CD4-positive, alpha-beta T cell (primary cell): ENCODE measurements at regions of chr16 and their contacts with region 1.

Region 1: GRCh38 chr16:29926005-29926710 is at the start of gene KCTD13:
- DNase-seq: peak; percentile 75 to 94 (median 86)
- ATAC-seq: peak; percentile 89
- H3K4me3 ChIP-seq: peak within 1 kb of the TSS; percentile 74
- H3K4me3 Mint-ChIP-seq: peak within 1 kb of the TSS; percentile 95
- H3K27ac ChIP-seq: peak within 1 kb of the TSS; percentile 42 to 72
- H3K27ac Mint-ChIP-seq: peak within 1 kb of the TSS; percentile 93
- H3K4me1 ChIP-seq: peaks cover 30% of the 10 kb centered on the region
- H3K4me1 Mint-ChIP-seq: peaks cover 38% of the 10 kb centered on the region
- H3K27me3 ChIP-seq: no peaks in the 10 kb centered on the region
- H3K27me3 Mint-ChIP-seq: no peaks in the 10 kb centered on the region
- CTCF ChIP-seq: no peak
- total RNA-seq, gene KCTD13: 40.0 to 43.8 TPM

Region 2: DNA sequence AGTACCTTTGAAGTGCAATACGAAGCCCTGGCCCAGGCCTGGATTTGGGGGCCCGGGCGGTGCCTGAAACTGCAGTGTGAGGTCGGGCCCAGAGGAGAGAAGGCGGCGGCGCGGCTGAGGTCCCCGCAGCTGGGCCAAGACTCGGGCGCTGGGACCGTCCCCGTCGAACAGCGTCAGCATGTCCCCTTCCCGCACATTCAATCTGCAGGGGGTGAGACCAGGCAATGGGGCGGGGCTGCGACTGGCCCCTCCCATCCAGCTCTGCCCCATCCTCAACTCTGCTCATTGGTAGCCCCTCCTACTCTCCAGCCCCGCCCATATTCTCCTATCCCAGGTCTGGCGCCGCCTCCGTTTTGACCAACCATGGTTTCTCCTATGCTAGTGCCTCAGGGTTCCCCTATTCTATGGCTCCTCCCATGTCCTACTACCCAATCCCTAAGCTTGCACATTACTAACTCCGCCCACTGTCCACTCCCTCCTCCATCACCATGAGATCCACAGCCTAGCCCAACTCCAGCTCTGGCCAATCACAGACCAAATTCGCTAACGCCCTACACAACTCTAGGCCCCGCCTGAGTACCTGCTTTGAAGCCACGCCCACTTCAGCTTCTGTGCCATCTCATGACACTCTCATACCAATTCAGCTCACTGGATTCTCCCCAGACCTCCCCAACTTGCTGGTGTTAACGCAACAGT is 48.7 kb before region 1 on chr16:
- CTCF ChIA-PET with region 1: no interaction called
- POLR2A ChIA-PET with region 1: no interaction called
- intact Hi-C with region 1: no loop called
- DNase-seq: peak in 11 of 14 experiments; percentile 18 to 77 (median 38)
- ATAC-seq: peak; percentile 66
- H3K4me3 ChIP-seq: peak overlapping the region; percentile 45
- H3K4me3 Mint-ChIP-seq: peak overlapping the region; percentile 89
- H3K27ac ChIP-seq: no peak overlapping the region
- H3K27ac Mint-ChIP-seq: no peak overlapping the region
- H3K4me1 ChIP-seq: peaks cover 20% of the 10 kb centered on the region
- H3K4me1 Mint-ChIP-seq: peaks cover 18% of the 10 kb centered on the region
- H3K27me3 ChIP-seq: peaks cover 23 to 29% of the 10 kb centered on the region in 2 experiments
- H3K27me3 Mint-ChIP-seq: peaks cover 29% of the 10 kb centered on the region
- CTCF ChIP-seq: no peak

Region 3: GRCh38 chr16:29900102-29900887 is 25.9 kb before region 1 on chr16 and contains the start of gene ASPHD1:
- CTCF ChIA-PET with region 1: no interaction called
- POLR2A ChIA-PET with region 1: interaction called, 18 read pairs
- intact Hi-C with region 1: no loop called
- DNase-seq: peak in 11 of 14 experiments; percentile 47 to 88 (median 70)
- ATAC-seq: peak; percentile 89
- H3K4me3 ChIP-seq: peak within 1 kb of the TSS; percentile 55
- H3K4me3 Mint-ChIP-seq: peak within 1 kb of the TSS; percentile 74
- H3K27ac ChIP-seq: no peak within 1 kb of the TSS
- H3K27ac Mint-ChIP-seq: no peak within 1 kb of the TSS
- H3K4me1 ChIP-seq: peaks cover 22% of the 10 kb centered on the region
- H3K4me1 Mint-ChIP-seq: peaks cover 4% of the 10 kb centered on the region
- H3K27me3 ChIP-seq: peaks cover 28 to 29% of the 10 kb centered on the region in 2 experiments
- H3K27me3 Mint-ChIP-seq: peaks cover 31% of the 10 kb centered on the region
- CTCF ChIP-seq: no peak
- total RNA-seq, gene ASPHD1: not detected

Region 4: DNA sequence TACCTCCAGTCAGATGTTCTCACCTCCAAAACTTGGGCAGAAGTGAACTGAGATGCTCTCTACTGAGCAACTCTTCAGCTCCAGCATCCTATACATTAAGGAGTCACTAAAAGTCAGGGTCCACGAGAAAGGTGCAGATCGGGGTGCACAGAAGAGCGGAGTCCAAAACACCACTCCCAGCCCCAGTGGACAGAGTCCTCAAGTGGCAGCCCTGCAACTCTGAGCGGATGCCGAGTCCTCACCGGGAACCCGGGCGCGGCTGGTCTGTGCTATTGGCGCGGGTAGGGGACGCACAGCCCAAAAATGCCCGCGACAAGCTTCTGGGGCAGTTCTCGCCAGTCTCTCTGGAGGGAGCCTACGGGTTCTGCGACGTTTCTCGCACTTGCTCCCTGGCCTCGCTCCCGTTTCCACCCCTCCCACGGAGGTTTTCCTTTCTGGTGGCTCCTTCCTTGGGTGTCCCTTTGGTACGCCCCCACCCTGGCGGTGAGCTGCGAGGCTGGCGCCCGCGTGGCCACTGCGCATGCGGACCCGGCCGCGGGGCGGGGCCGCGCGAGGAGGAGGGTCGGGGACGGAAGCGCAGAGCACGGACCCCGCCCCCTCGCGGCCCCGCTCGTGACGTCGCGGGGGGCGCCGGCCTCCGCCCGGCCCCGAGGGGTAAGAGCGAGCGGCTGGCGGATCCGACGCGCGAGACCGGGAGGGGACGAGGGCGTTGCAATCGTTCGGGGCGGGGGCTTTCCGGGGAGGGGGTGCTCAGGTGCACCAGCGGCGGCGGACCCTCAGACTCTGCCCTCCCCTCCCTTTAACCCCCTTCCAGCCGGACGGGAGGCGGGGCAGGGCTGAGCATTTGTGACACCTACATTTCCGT is 35.6 kb after region 1 on chr16 and contains the start of gene TMEM219:
- CTCF ChIA-PET with region 1: interaction called, 7 read pairs
- POLR2A ChIA-PET with region 1: interaction called, 40 read pairs
- intact Hi-C with region 1: loop called (anchors 1 to 2 kb)
- DNase-seq: peak; percentile 87 to 97 (median 94)
- ATAC-seq: peak; percentile 83
- H3K4me3 ChIP-seq: peak within 1 kb of the TSS; percentile 88
- H3K4me3 Mint-ChIP-seq: peak within 1 kb of the TSS; percentile 93
- H3K27ac ChIP-seq: peak within 1 kb of the TSS; percentile 77 to 92
- H3K27ac Mint-ChIP-seq: peak within 1 kb of the TSS; percentile 91
- H3K4me1 ChIP-seq: peaks cover 23% of the 10 kb centered on the region
- H3K4me1 Mint-ChIP-seq: peaks cover 31% of the 10 kb centered on the region
- H3K27me3 ChIP-seq: no peaks in the 10 kb centered on the region
- H3K27me3 Mint-ChIP-seq: no peaks in the 10 kb centered on the region
- CTCF ChIP-seq: peak; percentile 32
- total RNA-seq, gene TMEM219: 56.9 to 63.3 TPM

Region 5: GRCh38 chr16:29973384-29974246 is 47.5 kb after region 1 on chr16 and contains the start of gene TAOK2:
- CTCF ChIA-PET with region 1: interaction called, 3 read pairs
- POLR2A ChIA-PET with region 1: interaction called, 21 read pairs
- intact Hi-C with region 1: loop called in 1 of 2 experiments (anchors 5 kb)
- DNase-seq: peak; percentile 76 to 98 (median 90)
- ATAC-seq: peak; percentile 87
- H3K4me3 ChIP-seq: peak within 1 kb of the TSS; percentile 99
- H3K4me3 Mint-ChIP-seq: peak within 1 kb of the TSS; percentile 98
- H3K27ac ChIP-seq: peak within 1 kb of the TSS; percentile 70 to 83
- H3K27ac Mint-ChIP-seq: peak within 1 kb of the TSS; percentile 84
- H3K4me1 ChIP-seq: peaks cover 39% of the 10 kb centered on the region
- H3K4me1 Mint-ChIP-seq: peaks cover 50% of the 10 kb centered on the region
- H3K27me3 ChIP-seq: no peaks in the 10 kb centered on the region
- H3K27me3 Mint-ChIP-seq: no peaks in the 10 kb centered on the region
- CTCF ChIP-seq: no peak
- total RNA-seq, gene TAOK2: 13.1 to 14.1 TPM

Region 6: GRCh38 chr16:30142672-30143346 is 216.7 kb after region 1 on chr16:
- CTCF ChIA-PET with region 1: no interaction called
- POLR2A ChIA-PET with region 1: no interaction called
- intact Hi-C with region 1: no loop called
- DNase-seq: peak in 6 of 14 experiments; percentile 9 to 66 (median 43)
- ATAC-seq: peak; percentile 56
- H3K4me3 ChIP-seq: no peak overlapping the region
- H3K4me3 Mint-ChIP-seq: no peak overlapping the region
- H3K27ac ChIP-seq: no peak overlapping the region
- H3K27ac Mint-ChIP-seq: peak overlapping the region; percentile 69
- H3K4me1 ChIP-seq: peaks cover 20% of the 10 kb centered on the region
- H3K4me1 Mint-ChIP-seq: peaks cover 15% of the 10 kb centered on the region
- H3K27me3 ChIP-seq: no peaks in the 10 kb centered on the region
- H3K27me3 Mint-ChIP-seq: no peaks in the 10 kb centered on the region
- CTCF ChIP-seq: peak; percentile 28

Region 7: GRCh38 chr16:30187971-30188561 is 261.9 kb after region 1 on chr16:
- CTCF ChIA-PET with region 1: no interaction called
- POLR2A ChIA-PET with region 1: no interaction called
- intact Hi-C with region 1: no loop called
- DNase-seq: peak in 3 of 14 experiments; percentile 1 to 38 (median 35)
- ATAC-seq: no peak
- H3K4me3 ChIP-seq: peak overlapping the region; percentile 100
- H3K4me3 Mint-ChIP-seq: peak overlapping the region; percentile 42
- H3K27ac ChIP-seq: peak overlapping the region; percentile 29 to 96
- H3K27ac Mint-ChIP-seq: peak overlapping the region; percentile 98
- H3K4me1 ChIP-seq: peaks cover 40% of the 10 kb centered on the region
- H3K4me1 Mint-ChIP-seq: peaks cover 22% of the 10 kb centered on the region
- H3K27me3 ChIP-seq: no peaks in the 10 kb centered on the region
- H3K27me3 Mint-ChIP-seq: no peaks in the 10 kb centered on the region
- CTCF ChIP-seq: no peak

Region 8: GRCh38 chr16:30820952-30821760 is 895.0 kb after region 1 on chr16:
- CTCF ChIA-PET with region 1: no interaction called
- POLR2A ChIA-PET with region 1: no interaction called
- intact Hi-C with region 1: no loop called
- DNase-seq: no peak
- ATAC-seq: no peak
- H3K4me3 ChIP-seq: no peak overlapping the region
- H3K4me3 Mint-ChIP-seq: no peak overlapping the region
- H3K27ac ChIP-seq: no peak overlapping the region
- H3K27ac Mint-ChIP-seq: no peak overlapping the region
- H3K4me1 ChIP-seq: no peaks in the 10 kb centered on the region
- H3K4me1 Mint-ChIP-seq: no peaks in the 10 kb centered on the region
- H3K27me3 ChIP-seq: no peaks in the 10 kb centered on the region
- H3K27me3 Mint-ChIP-seq: no peaks in the 10 kb centered on the region
- CTCF ChIP-seq: no peak